Activated CD4-positive, alpha-beta memory T cell treated with anti-CD3 and anti-CD28 coated beads, Interleukin-2, amount 10 ng/mL, durations not matched to agents 7 days and 5 days (primary cell): ENCODE measurements at regions of chr1 and their contacts with region 1.

Region 1: DNA sequence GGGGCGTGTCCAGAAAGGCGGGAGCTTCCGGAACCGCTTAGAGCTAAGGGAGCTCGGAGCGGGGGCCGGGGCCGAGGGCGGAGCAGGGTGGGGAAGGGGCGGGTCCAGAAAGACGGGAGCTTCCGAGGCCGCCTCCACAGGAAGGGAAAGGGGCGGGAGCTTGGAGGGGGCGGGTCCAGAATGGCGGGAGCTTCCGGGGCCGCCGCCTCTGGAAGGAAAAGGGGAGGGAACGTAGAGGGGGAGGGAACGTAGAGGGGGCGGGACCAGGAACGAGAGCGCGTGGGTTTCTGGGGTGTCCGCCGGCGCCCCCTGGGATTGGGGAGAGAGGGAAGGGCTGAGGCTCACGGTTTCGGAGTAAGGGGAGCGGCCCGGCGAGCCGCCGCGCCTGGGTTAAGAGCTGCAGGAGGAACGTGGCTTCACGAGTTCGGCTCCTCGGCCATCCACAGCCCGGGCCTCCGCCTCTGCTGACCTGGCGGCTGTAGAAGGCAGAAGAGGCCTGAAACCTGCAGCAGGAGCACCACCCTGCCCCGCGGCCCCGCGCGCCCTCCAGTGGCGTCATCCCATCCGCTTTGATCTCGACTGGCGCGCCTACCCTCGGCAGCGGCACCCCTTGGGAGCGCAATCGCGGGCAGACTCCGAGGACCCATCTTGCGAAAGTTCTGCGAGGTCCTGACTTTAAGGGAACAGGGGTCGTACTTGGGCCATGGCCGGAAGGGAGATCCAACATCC is 22.9 kb upstream of the HPDL start:
- DNase-seq: peak; percentile 99
- H3K4me3 Mint-ChIP-seq: peak overlapping the region; percentile 83
- H3K27ac Mint-ChIP-seq: peak overlapping the region; percentile 86
- H3K4me1 Mint-ChIP-seq: peaks cover 44% of the 10 kb centered on the region
- H3K27me3 Mint-ChIP-seq: no peaks in the 10 kb centered on the region

Region 2: DNA sequence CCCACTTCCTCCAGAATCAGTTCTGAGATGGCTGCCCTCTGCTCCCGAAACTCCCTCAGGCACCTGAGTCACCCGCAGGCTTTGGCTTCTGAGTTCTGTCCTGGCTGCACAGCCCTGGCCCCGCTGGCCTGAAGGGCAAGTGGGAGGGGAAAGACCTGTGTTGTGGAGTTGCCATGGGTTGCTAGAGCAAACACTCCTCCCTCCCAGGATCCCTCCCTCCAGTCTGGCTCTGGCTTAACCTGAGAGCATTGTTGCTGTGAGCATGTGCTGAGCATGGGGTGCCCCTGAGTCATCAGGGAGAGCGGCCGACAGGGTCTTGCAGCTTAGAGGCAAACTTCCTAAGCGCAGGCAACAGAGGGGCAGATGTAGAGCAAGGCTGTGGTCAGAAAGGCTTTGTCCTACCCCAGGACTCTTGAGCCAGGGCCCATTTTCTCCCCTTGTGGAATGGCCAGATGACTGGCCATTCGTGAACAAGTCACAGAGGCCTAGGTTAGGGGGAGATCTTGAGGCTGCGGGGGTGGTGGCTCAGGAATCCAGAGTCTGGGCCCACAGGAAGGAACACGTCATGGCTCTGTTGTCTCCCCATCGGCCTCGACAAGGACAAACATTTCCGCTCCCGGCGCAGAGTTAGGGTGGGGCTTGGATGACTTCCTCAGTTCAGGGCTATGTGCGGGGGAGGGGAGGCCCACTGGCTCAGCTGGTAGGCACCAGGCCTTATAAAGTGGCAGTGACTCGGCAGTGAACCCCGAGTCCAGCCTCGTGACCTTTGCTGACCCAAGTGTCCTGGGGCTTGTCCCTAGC is 496.3 kb before region 1 on chr1 and contains the start of gene DYNLT4:
- CTCF ChIA-PET with region 1: interaction called, 5 read pairs
- POLR2A ChIA-PET with region 1: interaction called, 12 read pairs
- DNase-seq: peak; percentile 93
- H3K4me3 Mint-ChIP-seq: peak within 1 kb of the TSS; percentile 73
- H3K27ac Mint-ChIP-seq: peak within 1 kb of the TSS; percentile 98
- H3K4me1 Mint-ChIP-seq: peaks cover 92% of the 10 kb centered on the region
- H3K27me3 Mint-ChIP-seq: no peaks in the 10 kb centered on the region
- total RNA-seq, gene DYNLT4: 1.9 to 2.2 TPM

Region 3: GRCh38 chr1:44985747-44986359 is 317.9 kb before region 1 on chr1:
- CTCF ChIA-PET with region 1: interaction called, 10 read pairs
- POLR2A ChIA-PET with region 1: interaction called, 7 read pairs
- DNase-seq: no peak
- H3K4me3 Mint-ChIP-seq: peak overlapping the region; percentile 90
- H3K27ac Mint-ChIP-seq: peak overlapping the region; percentile 86
- H3K4me1 Mint-ChIP-seq: peaks cover 28% of the 10 kb centered on the region
- H3K27me3 Mint-ChIP-seq: peaks cover 2% of the 10 kb centered on the region

Region 4: GRCh38 chr1:45018599-45019230 is 285.0 kb before region 1 on chr1:
- CTCF ChIA-PET with region 1: interaction called, 331 read pairs
- POLR2A ChIA-PET with region 1: interaction called, 17 read pairs
- DNase-seq: peak; percentile 66
- H3K4me3 Mint-ChIP-seq: no peak overlapping the region
- H3K27ac Mint-ChIP-seq: no peak overlapping the region
- H3K4me1 Mint-ChIP-seq: peaks cover 10% of the 10 kb centered on the region
- H3K27me3 Mint-ChIP-seq: no peaks in the 10 kb centered on the region

Region 5: GRCh38 chr1:45314266-45314665 is 10.5 kb after region 1 on chr1:
- CTCF ChIA-PET with region 1: interaction called, 13 read pairs
- POLR2A ChIA-PET with region 1: no interaction called
- DNase-seq: no peak
- H3K4me3 Mint-ChIP-seq: no peak overlapping the region
- H3K27ac Mint-ChIP-seq: no peak overlapping the region
- H3K4me1 Mint-ChIP-seq: no peaks in the 10 kb centered on the region
- H3K27me3 Mint-ChIP-seq: peaks cover 4% of the 10 kb centered on the region

Region 6: DNA sequence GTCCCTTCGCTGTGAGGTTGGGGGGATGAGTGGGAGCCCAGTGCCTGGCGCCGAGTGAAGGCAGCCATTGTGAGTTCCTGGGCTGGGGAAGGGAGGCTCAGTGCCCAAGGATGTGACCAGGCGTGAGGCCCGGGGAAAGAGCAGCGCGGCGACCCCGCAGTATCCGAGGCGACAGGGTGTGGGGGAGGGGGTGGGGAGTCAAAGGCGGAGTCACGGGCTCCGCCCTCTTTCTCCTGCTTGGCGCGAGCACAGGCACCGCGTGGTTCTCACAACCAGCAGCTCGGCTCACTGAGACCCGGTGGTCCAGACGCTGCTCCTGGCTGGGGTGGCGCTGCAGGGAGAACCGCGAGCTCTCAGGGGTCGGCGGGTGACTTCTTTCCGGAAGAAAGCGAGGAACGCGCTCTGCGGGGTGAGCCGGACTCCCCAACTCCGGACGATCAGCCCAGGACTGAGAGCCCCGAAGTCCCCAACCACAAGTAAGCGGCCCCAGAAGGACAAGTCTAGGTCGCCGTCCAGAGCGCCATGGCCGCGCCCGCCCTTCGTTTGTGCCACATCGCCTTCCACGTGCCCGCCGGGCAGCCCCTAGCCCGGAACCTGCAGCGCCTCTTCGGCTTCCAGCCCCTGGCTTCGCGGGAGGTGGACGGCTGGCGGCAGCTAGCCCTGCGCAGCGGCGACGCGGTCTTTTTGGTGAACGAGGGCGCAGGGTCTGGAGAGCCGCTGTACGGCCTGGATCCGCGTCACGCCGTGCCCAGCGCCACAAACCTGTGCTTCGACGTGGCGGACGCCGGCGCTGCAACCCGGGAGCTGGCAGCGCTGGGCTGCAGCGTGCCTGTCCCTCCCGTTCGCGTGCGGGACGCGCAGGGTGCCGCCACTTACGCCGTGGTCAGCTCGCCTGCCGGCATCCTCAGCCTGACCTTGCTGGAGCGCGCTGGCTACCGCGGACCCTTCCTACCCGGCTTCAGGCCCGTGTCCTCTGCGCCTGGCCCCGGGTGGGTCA is 23.2 kb after region 1 on chr1 and contains the start of gene HPDL:
- CTCF ChIA-PET with region 1: interaction called, 9 read pairs
- POLR2A ChIA-PET with region 1: interaction called, 39 read pairs
- DNase-seq: peak; percentile 64
- H3K4me3 Mint-ChIP-seq: peak within 1 kb of the TSS; percentile 74
- H3K27ac Mint-ChIP-seq: peak within 1 kb of the TSS; percentile 16
- H3K4me1 Mint-ChIP-seq: peaks cover 25% of the 10 kb centered on the region
- H3K27me3 Mint-ChIP-seq: no peaks in the 10 kb centered on the region
- total RNA-seq, gene HPDL: 5.5 to 5.6 TPM

Region 7: GRCh38 chr1:45490626-45491486 is 187.1 kb after region 1 on chr1 and contains the start of gene TESK2:
- CTCF ChIA-PET with region 1: interaction called, 48 read pairs
- POLR2A ChIA-PET with region 1: interaction called, 3 read pairs
- DNase-seq: peak; percentile 98
- H3K4me3 Mint-ChIP-seq: no peak within 1 kb of the TSS
- H3K27ac Mint-ChIP-seq: no peak within 1 kb of the TSS
- H3K4me1 Mint-ChIP-seq: peaks cover 7% of the 10 kb centered on the region
- H3K27me3 Mint-ChIP-seq: peaks cover 7% of the 10 kb centered on the region
- total RNA-seq, gene TESK2: 3.7 to 4.3 TPM